ENCODE measurements at regions of chr2 and their contacts with region 1.

Region 1: GRCh38 chr2:102975996-102976975 is 214.5 kb downstream of the TMEM182 start:
- DNase-seq: peak; percentile 78
- H3K4me3 Mint-ChIP-seq: no peak overlapping the region
- H3K27ac Mint-ChIP-seq: no peak overlapping the region
- H3K4me1 Mint-ChIP-seq: peaks cover 7% of the 10 kb centered on the region
- H3K27me3 Mint-ChIP-seq: no peaks in the 10 kb centered on the region
- CTCF ChIP-seq: peak; percentile 79

Region 2: DNA sequence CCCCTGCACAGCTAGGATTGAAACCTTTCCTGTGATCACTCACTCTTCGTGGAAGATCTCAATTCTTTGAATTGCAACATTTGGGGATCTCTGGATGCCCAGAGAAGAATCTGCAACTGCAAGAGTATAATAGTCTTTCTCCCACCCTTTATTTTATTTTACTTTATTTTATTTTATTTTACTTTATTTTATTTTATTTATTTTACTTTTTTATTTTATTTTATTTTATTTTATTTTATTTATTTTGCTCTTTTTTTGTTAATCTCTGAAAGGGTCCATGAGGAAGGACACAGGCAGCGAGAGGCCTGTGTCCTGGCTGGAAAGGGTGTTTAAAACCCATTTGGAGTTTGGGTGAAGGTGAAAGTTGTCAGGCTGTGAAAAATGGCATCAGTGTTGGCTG is 33.0 kb before region 1 on chr2:
- CTCF ChIA-PET with region 1: interaction called, 11 read pairs
- POLR2A ChIA-PET with region 1: no interaction called
- intact Hi-C with region 1: no loop called
- DNase-seq: no peak
- H3K4me3 Mint-ChIP-seq: no peak overlapping the region
- H3K27ac Mint-ChIP-seq: no peak overlapping the region
- H3K4me1 Mint-ChIP-seq: no peaks in the 10 kb centered on the region
- H3K27me3 Mint-ChIP-seq: no peaks in the 10 kb centered on the region
- CTCF ChIP-seq: no peak

Region 3: DNA sequence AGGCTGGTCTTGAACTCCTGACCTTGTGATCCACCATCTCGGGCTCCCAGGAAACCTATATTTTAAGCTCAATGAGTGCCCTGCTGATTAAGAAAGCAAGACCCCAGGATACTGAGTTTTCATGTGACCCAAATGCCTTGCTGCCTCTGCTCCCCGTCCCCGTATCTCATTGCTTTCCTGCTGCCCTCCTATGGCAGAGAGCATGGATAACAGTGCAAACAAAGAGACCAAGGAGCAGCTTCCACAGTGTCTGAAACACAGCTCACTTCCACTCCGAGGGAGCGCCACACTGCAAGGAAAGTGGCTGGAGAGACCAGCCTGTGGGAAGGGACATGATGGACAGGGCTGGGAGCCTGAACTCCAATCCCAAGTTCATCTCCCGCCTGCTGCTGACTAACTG is 32.3 kb after region 1 on chr2:
- CTCF ChIA-PET with region 1: interaction called, 12 read pairs
- POLR2A ChIA-PET with region 1: no interaction called
- intact Hi-C with region 1: no loop called
- DNase-seq: no peak
- H3K4me3 Mint-ChIP-seq: no peak overlapping the region
- H3K27ac Mint-ChIP-seq: no peak overlapping the region
- H3K4me1 Mint-ChIP-seq: no peaks in the 10 kb centered on the region
- H3K27me3 Mint-ChIP-seq: peaks cover 40% of the 10 kb centered on the region
- CTCF ChIP-seq: no peak

Region 4: GRCh38 chr2:104412384-104412783 is 1436.1 kb after region 1 on chr2:
- CTCF ChIA-PET with region 1: no interaction called
- POLR2A ChIA-PET with region 1: no interaction called
- intact Hi-C with region 1: loop called (anchors 2 kb)
- DNase-seq: peak; percentile 62
- H3K4me3 Mint-ChIP-seq: no peak overlapping the region
- H3K27ac Mint-ChIP-seq: no peak overlapping the region
- H3K4me1 Mint-ChIP-seq: no peaks in the 10 kb centered on the region
- H3K27me3 Mint-ChIP-seq: peaks cover 87% of the 10 kb centered on the region
- CTCF ChIP-seq: peak; percentile 47

Measured in MCF 10A (cell line).